ENCODE measurements at regions of chr10 and their contacts with region 1.

Region 1: DNA sequence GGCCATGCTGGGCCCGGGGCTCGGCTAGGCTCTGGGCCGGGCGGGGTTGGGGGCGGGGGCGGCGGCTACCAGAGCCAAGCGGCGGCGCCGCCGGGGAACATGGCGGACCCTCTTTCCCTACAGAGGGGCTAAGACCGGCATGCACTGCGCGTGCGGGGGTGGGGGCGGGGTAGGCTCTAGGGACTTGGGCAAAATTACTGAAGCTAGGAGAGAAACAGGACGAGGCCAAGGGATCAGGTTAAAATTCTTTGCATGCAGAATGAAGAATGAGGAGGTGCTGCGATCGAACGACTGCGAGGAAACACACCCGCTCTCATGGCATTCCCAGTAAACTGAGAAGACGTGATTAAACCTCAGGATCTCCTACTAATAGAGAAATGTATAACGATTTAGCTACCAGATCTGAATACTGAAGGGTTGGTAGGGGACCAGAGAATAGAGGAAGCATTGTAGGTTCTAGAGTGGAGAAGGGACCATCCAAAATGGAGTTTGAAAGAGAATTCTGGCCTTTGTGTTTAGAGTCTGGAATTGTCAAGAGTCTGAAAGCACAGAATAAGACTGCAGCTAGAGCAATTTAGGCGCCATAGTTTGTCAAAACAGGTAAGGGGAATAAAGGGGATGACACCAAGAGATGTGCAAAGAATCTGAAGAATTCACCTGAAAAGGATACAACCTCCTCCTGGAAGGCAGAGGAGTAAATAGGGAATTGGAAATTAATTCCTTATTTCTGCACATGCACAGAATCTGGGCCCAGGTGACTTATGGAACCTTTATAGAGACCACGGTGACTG is at the start of gene PPP3CB:
- DNase-seq: peak; percentile 94
- ATAC-seq: peak; percentile 87
- H3K4me3 ChIP-seq: peak within 1 kb of the TSS; percentile 94 to 98
- H3K27ac ChIP-seq: peak within 1 kb of the TSS; percentile 97
- H3K4me1 ChIP-seq: peaks cover 13 to 21% of the 10 kb centered on the region in 2 experiments; a peak in 3 of 4 replicates
- H3K27me3 ChIP-seq: no peaks in the 10 kb centered on the region
- CTCF ChIP-seq: no peak
- POLR2A ChIP-seq: no peak
- RAD21 ChIP-seq: no peak
- total RNA-seq, gene PPP3CB: 32.0 TPM

Region 2: GRCh38 chr10:73238990-73239566 is 257.0 kb before region 1 on chr10:
- CTCF ChIA-PET with region 1: no interaction called
- POLR2A ChIA-PET with region 1: no interaction called
- RAD21 ChIA-PET with region 1: no interaction called
- intact Hi-C with region 1: no loop called
- DNase-seq: no peak
- ATAC-seq: no peak
- H3K4me3 ChIP-seq: no peak overlapping the region
- H3K27ac ChIP-seq: no peak overlapping the region
- H3K4me1 ChIP-seq: no peaks in the 10 kb centered on the region
- H3K27me3 ChIP-seq: no peaks in the 10 kb centered on the region
- CTCF ChIP-seq: no peak
- POLR2A ChIP-seq: no peak
- RAD21 ChIP-seq: no peak

Region 3: DNA sequence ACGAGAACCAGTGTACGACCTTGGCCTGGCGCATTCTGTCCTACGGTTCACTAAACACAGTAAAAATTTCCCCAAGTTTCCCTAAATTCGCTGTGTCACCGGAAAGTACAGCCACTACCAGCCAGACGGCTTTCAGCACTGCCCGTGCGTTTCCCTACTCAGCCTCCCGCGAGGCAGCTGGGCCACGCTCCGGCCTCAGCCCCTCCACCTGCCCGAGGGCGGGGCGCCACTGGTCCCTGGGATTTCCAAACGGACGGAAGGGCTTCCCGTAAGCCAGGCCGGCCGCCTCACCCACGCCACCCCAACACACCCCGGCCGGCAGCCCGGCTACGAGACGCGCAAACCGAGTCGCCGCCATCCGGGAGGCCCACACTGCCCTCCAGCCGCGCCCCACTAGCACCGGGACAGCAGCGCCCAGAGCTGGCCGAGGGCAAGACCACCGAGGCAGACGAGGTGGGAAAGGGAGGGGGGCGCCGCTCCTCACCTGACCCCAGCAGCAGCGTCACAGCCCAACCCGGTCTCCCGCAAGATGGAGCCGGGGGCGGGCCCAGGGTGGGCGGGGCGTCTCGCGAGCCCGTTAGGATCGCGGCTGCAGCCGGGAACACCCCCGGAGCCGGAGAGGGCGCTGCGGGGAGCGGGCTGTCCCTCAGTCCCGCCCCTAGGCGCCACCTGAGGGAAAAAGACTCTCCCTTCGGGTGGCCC is 82.4 kb before region 1 on chr10 and contains the start of gene ANXA7:
- CTCF ChIA-PET with region 1: no interaction called
- POLR2A ChIA-PET with region 1: interaction called, 3 read pairs
- RAD21 ChIA-PET with region 1: no interaction called
- intact Hi-C with region 1: loop called (anchors 5 kb)
- DNase-seq: peak; percentile 68
- ATAC-seq: peak; percentile 97
- H3K4me3 ChIP-seq: peak within 1 kb of the TSS; percentile 91 to 96
- H3K27ac ChIP-seq: peak within 1 kb of the TSS; percentile 90
- H3K4me1 ChIP-seq: peaks cover 6 to 21% of the 10 kb centered on the region in 2 experiments
- H3K27me3 ChIP-seq: no peaks in the 10 kb centered on the region
- CTCF ChIP-seq: peak in 1 of 3 experiments; percentile 8; a peak in 1 of 6 replicates
- POLR2A ChIP-seq: peak; percentile 63
- RAD21 ChIP-seq: no peak
- total RNA-seq, gene ANXA7: 105 TPM

Region 4: DNA sequence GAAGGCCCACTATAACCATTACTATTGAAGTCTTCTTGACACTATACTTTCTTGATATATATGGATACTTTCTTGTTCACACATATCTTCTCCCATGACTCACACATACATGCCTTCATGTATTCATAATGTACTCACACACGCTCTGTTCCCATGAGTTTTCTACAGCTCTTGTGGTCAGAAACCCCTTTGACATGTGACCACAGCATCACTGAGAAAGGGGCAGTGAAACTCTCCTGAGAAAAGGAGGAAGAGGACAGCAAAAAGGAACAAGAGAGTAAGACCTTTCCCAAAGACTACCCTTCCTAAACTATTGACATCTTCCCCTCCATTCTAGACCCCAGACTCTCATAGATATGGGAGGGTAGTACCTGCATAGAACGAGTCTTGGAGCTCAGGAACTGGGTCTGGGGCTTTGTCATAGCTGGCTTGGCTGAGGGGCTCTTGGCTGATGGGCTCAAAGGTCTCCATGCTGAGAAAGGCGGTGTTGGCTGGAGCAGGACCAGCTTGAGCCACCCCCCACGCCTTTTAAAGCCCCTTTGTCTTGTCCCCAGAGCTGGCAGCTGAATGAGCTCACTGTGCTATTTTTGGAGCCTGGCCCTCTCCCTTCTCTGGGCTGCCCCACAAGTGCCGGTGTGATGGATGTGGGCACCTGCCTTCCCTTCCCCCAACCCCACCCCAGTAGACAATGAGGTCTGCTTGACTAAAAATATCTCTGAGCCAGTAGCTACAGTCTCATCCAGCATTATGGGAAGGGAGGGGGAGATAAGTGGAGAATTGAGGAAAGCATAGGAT is 154.7 kb after region 1 on chr10:
- CTCF ChIA-PET with region 1: no interaction called
- POLR2A ChIA-PET with region 1: no interaction called
- RAD21 ChIA-PET with region 1: no interaction called
- intact Hi-C with region 1: no loop called
- DNase-seq: no peak
- ATAC-seq: no peak
- H3K4me3 ChIP-seq: no peak overlapping the region
- H3K27ac ChIP-seq: no peak overlapping the region
- H3K4me1 ChIP-seq: peaks cover 0 to 7% of the 10 kb centered on the region in 2 experiments; a peak in 3 of 4 replicates
- H3K27me3 ChIP-seq: 0 out of 2 replicates have a peak, but pooled peaks cover 4% of the 10 kb centered on the region
- CTCF ChIP-seq: no peak
- POLR2A ChIP-seq: no peak
- RAD21 ChIP-seq: no peak

Region 5: GRCh38 chr10:73879296-73880173 is 383.5 kb after region 1 on chr10:
- CTCF ChIA-PET with region 1: no interaction called
- POLR2A ChIA-PET with region 1: no interaction called
- RAD21 ChIA-PET with region 1: no interaction called
- intact Hi-C with region 1: no loop called
- DNase-seq: peak; percentile 81
- ATAC-seq: peak; percentile 90
- H3K4me3 ChIP-seq: no peak overlapping the region
- H3K27ac ChIP-seq: no peak overlapping the region
- H3K4me1 ChIP-seq: peaks cover 29 to 53% of the 10 kb centered on the region in 2 experiments
- H3K27me3 ChIP-seq: no peaks in the 10 kb centered on the region
- CTCF ChIP-seq: peak in 2 of 3 experiments; percentile 93 to 97; a peak in 4 of 6 replicates
- POLR2A ChIP-seq: no peak
- RAD21 ChIP-seq: no peak